Gastrocnemius medialis (tissue), 4 donors: ENCODE measurements at regions of chr1 and their contacts with region 1.

Region 1: GRCh38 chr1:34786521-34787325 is 5.7 kb downstream of the GJB3 start:
- DNase-seq: peak in 1 of 2 donors; percentile 39
- ATAC-seq: peak; percentile 65 to 70
- H3K4me3 ChIP-seq: no peak overlapping the region
- H3K27ac ChIP-seq: no peak overlapping the region
- H3K4me1 ChIP-seq: peaks cover under 1 to 3% of the 10 kb centered on the region in 2 donors
- H3K27me3 ChIP-seq: peaks cover 11 to 17% (median 14%) of the 10 kb centered on the region in 3 donors
- CTCF ChIP-seq: peak; percentile 36 to 81 (median 69)
- POLR2A ChIP-seq: no peak

Region 2: GRCh38 chr1:34681480-34682451 is 105.0 kb before region 1 on chr1:
- in situ Hi-C with region 1: no loop called
- intact Hi-C with region 1: no loop called
- DNase-seq: no peak
- ATAC-seq: no peak
- H3K4me3 ChIP-seq: no peak overlapping the region
- H3K27ac ChIP-seq: no peak overlapping the region
- H3K4me1 ChIP-seq: peaks cover 0 to 5% of the 10 kb centered on the region in 2 donors
- H3K27me3 ChIP-seq: no peaks in the 10 kb centered on the region
- CTCF ChIP-seq: peak in 4 of 5 experiments; percentile 17 to 66 (median 42)
- POLR2A ChIP-seq: no peak

Region 3: GRCh38 chr1:34740161-34740868 is 46.4 kb before region 1 on chr1:
- in situ Hi-C with region 1: no loop called
- intact Hi-C with region 1: no loop called
- DNase-seq: no peak
- ATAC-seq: no peak
- H3K4me3 ChIP-seq: no peak overlapping the region
- H3K27ac ChIP-seq: no peak overlapping the region
- H3K4me1 ChIP-seq: no peaks in the 10 kb centered on the region
- H3K27me3 ChIP-seq: peaks cover 0 to 7% (median 4%) of the 10 kb centered on the region in 3 donors
- CTCF ChIP-seq: no peak
- POLR2A ChIP-seq: no peak

Region 4: DNA sequence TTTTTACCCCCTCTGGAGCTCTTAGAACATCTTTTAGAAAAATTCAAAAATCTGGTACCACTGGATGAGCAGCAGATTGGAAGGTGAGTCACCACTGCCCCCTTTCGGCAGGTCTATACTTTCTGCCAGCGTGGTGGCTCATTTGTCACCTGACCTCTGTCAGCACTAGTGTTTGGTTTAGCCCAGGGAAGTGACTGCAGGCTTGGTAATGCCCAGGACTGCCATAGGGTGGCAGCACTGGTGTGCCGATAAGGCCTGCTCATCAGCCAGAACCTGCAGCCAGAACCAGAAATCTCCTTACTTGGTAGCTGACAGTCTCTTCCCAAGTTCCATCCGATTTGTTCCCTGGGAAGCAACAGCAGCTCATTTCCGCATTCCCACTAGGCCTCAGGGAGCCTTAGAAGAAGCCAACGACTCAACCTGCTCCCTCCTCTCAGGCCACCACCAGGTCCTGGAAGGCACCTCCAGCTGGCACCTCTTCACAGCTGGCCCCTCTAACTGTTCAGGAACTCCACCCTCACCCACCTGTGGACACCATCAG is 66.0 kb after region 1 on chr1:
- in situ Hi-C with region 1: loop called in 1 of 4 experiments (anchors 5 kb)
- intact Hi-C with region 1: loop called (anchors 2 kb)
- DNase-seq: peak; percentile 40 to 83
- ATAC-seq: peak; percentile 87 to 97
- H3K4me3 ChIP-seq: no peak overlapping the region
- H3K27ac ChIP-seq: peak overlapping the region; percentile 50 to 74 (median 60)
- H3K4me1 ChIP-seq: peaks cover 10 to 22% of the 10 kb centered on the region in 2 donors
- H3K27me3 ChIP-seq: no peaks in the 10 kb centered on the region
- CTCF ChIP-seq: peak; percentile 81 to 90 (median 86)
- POLR2A ChIP-seq: no peak

Region 5: DNA sequence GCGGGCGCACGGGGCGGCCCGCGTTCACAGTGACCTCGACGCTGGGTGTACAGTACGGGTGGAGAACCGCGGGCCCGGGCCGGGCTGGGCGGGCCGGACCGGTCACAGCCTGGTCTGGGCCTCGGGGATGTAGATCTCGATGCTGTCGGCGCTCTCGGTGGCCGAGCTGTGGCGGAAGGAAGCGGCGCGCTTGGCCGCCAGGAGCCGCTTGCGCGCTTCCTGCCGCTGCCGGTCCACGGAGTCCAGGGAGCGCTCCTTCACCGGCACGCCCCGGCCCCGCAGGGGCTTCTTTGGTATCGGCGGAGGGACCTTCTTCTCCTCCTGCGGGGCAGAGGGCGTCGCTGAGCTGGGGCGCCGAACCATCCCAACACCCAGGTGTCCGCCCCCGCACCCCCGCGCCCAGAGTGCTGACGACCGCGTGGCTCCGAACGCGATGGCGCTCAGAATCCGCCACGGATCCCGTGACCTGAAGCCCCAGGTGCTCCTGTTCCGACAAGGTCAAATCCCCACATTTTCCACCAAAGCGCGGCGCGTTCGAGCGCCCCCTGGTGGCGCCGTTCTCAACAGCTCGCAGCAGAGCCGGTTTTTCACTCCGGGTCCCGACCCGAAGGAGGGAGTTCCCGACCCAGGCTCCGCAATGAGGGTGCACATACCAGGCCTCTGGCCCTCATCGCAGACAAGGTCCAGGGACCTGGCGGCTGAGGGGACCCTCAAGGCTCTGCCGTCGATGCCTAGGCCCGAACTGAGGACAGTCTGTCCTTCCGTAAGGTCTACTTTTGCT is 79.4 kb after region 1 on chr1:
- in situ Hi-C with region 1: no loop called
- intact Hi-C with region 1: loop called (anchors 5 kb)
- DNase-seq: peak; percentile 40 to 74
- ATAC-seq: peak; percentile 77 to 88
- H3K4me3 ChIP-seq: peak overlapping the region; percentile 77 to 98 (median 85)
- H3K27ac ChIP-seq: peak overlapping the region; percentile 64 to 82 (median 77)
- H3K4me1 ChIP-seq: peaks cover 5 to 6% of the 10 kb centered on the region in 2 donors
- H3K27me3 ChIP-seq: no peaks in the 10 kb centered on the region
- CTCF ChIP-seq: peak; percentile 84 to 97 (median 96)
- POLR2A ChIP-seq: peak; percentile 27 to 28